Sciatic nerve (tissue), 2 donors: ENCODE measurements at regions of chr4 and their contacts with region 1.

Region 1: DNA sequence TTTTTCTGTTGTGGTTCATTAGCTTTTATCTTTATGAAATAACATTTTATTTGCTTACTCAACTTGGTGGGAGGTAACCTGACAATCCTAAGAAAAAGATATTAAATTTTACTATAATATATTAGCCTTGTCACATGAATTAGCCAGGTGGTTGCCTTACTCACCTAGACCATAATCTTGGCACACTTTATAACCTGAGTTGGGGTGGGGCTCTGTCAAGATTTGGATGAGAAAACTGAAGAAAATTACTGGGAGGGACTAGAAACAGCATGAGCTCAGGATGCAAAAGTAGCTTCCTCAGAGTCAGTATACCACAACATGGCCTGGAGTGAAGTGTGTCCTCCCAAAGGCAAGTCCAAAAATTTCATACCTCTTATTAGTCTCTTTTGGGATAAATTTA is 164.9 kb upstream of the ANXA3 start:
- DNase-seq: no peak
- ATAC-seq: no peak

Region 2: DNA sequence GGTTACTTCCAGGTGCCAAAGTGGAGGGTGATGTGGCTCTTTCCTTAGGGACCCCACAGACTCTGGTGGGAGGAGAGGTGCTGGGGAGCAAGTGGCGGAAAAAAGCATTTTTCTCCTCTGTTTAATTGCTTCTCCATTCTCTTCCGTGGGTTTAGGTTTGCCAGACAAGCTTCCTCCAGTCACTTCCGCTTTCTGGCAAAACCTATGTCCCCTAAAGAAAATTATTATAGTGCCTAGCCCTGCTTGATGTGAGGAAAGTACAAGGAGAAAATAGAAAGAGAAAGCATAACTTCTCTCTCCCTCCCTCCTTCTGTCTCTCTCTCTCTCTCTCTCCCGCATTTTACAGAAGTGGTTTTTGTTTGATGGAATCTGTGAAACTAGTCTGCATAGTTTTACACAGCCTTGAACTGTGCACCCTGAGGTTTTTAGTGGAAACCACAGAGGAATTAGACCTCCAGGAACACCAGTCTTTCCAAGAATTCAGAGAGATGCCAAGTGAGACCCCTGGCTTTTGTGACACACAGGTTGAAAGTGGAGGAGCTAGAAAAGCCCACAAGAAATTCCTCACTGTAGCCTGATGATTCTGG is 66.2 kb before region 1 on chr4:
- intact Hi-C with region 1: no loop called
- DNase-seq: no peak
- ATAC-seq: no peak

Region 3: GRCh38 chr4:78369679-78370078 is 17.0 kb before region 1 on chr4:
- intact Hi-C with region 1: no loop called
- DNase-seq: no peak
- ATAC-seq: no peak

Region 4: DNA sequence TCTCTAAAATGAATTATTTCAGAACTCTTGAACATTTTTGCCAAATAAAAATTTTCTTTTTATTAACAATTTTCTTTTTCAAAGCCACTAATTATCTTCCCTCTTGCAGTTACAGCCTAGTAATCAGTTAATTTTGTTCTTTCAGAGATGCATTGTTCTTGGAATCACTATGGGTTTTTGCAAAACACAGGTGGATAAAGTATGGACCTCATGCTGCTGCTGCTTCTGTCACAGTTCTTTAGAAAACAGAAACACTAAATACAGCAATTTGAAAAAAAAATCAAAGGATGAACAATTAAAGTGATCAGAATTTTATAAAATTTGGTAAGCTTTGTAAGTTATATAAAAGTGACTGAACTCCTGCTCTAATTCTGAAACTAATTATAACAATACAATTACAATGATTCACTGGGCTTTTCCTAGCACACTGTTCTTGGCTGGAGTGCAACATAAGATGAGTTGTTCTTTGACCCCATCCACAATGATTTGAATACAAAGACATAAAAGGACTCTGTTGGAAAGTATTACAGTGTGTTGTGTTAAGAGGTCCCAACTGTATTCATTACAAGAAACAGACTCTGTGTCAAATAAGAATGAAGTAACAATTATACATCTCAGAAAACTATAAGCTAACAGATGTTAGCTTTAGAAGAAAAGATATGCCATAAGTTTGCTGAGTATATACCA is 1080.7 kb after region 1 on chr4:
- intact Hi-C with region 1: loop called (anchors 5 kb)
- DNase-seq: no peak
- ATAC-seq: no peak